Activated naive CD4-positive, alpha-beta T cell treated with anti-CD3 and anti-CD28 coated beads for 36 hours (primary cell): ENCODE measurements at regions of chr4 and their contacts with region 1.

Region 1: GRCh38 chr4:184453365-184454160 is 20.8 kb downstream of the IRF2 start:
- DNase-seq: peak; percentile 69
- H3K4me3 Mint-ChIP-seq: peak overlapping the region; percentile 65
- H3K27ac Mint-ChIP-seq: peak overlapping the region; percentile 86
- H3K4me1 Mint-ChIP-seq: peaks cover 69% of the 10 kb centered on the region
- H3K27me3 Mint-ChIP-seq: no peaks in the 10 kb centered on the region

Region 2: DNA sequence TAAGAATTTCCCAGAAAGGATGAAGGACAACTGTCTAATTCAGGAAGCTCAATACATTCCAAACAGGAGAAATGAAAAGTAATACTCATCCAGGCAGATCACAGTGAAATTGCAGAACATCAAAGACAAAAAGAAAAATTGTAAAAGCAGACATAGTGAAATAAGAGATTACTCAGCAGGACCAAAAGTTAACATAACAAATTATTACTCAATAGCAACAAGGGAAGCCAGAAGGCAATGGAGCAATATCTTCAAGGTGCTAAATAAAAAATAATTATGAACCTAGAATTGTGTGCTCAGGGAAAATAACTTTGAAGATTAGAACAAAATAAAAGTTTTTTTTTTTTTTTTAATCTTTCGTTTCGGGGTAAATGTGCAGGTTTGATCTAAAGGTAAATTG is 205.3 kb before region 1 on chr4:
- CTCF ChIA-PET with region 1: no interaction called
- intact Hi-C with region 1: no loop called
- DNase-seq: no peak
- H3K4me3 Mint-ChIP-seq: no peak overlapping the region
- H3K27ac Mint-ChIP-seq: no peak overlapping the region
- H3K4me1 Mint-ChIP-seq: peaks cover 20% of the 10 kb centered on the region
- H3K27me3 Mint-ChIP-seq: no peaks in the 10 kb centered on the region

Region 3: GRCh38 chr4:184427687-184428086 is 25.9 kb before region 1 on chr4:
- CTCF ChIA-PET with region 1: interaction called, 10 read pairs
- intact Hi-C with region 1: no loop called
- DNase-seq: no peak
- H3K4me3 Mint-ChIP-seq: no peak overlapping the region
- H3K27ac Mint-ChIP-seq: no peak overlapping the region
- H3K4me1 Mint-ChIP-seq: peaks cover 40% of the 10 kb centered on the region
- H3K27me3 Mint-ChIP-seq: no peaks in the 10 kb centered on the region